MCF 10A (cell line): ENCODE measurements at regions of chr9 and their contacts with region 1.

Region 1: GRCh38 chr9:105023788-105024187 is 95.8 kb upstream of the ABCA1 start:
- DNase-seq: no peak
- H3K4me3 Mint-ChIP-seq: no peak overlapping the region
- H3K27ac Mint-ChIP-seq: no peak overlapping the region
- H3K4me1 Mint-ChIP-seq: no peaks in the 10 kb centered on the region
- H3K27me3 Mint-ChIP-seq: no peaks in the 10 kb centered on the region
- CTCF ChIP-seq: no peak

Region 2: GRCh38 chr9:104961238-104961637 is 62.5 kb before region 1 on chr9:
- CTCF ChIA-PET with region 1: no interaction called
- POLR2A ChIA-PET with region 1: no interaction called
- intact Hi-C with region 1: loop called (anchors 2 kb)
- DNase-seq: peak; percentile 95
- H3K4me3 Mint-ChIP-seq: no peak overlapping the region
- H3K27ac Mint-ChIP-seq: no peak overlapping the region
- H3K4me1 Mint-ChIP-seq: peaks cover 15% of the 10 kb centered on the region
- H3K27me3 Mint-ChIP-seq: no peaks in the 10 kb centered on the region
- CTCF ChIP-seq: no peak